ENCODE measurements at regions of chr16 and their contacts with region 1.

Region 1: DNA sequence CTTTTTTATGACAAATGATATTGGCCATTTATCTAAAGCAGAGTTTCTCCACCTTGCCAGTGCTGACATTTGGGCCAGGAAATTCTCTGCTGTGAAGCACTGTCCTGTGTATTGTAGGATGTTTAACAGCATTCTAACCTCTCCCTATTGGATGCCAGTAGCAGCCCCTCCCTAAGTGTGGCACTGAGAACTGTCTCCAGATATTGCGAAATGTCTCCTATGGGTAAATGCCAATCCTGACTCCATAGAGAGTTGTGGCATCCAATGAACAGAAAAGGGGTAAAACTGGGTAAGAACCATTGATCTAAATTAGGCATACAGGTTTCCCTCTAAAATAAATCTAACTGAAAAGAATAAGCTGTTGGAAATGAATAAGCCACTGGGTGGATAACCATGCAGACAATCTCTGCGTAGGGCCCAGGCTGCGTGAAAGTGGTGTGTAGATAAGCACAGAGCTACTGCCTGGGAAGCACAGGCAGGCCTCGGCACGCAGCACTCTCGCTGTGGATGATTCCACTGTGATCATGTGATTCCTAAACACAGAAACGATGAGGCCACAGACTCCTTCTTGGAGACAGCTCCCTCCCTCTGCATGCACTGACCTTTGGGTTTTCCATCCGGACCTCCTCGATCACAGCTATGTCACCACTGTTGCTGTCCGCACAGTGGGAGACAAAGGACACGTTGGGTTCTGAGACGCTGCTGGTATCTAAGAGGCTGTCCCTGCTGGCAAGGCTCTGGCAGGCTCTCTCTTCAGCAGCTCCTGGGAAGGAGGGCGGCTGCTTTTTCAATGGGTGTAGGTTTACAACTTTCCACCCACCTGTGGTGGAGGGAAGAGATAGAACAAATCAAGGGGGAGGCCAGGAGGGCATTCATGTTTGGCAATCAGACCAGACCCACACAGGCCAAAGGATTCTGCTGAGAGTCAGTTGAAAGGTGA is 44.1 kb downstream of the GTF3C1 start:
- DNase-seq: peak in 3 of 5 donors; percentile 33 to 67 (median 66)
- ATAC-seq: peak; percentile 84 to 86 (median 85)
- H3K4me3 ChIP-seq: no peak overlapping the region
- H3K27ac ChIP-seq: peak overlapping the region in 11 of 12 donors; percentile 9 to 86 (median 72)
- H3K4me1 ChIP-seq: peaks cover 0 to 22% (median 5%) of the 10 kb centered on the region in 12 donors
- H3K27me3 ChIP-seq: no peaks in the 10 kb centered on the region
- CTCF ChIP-seq: no peak
- POLR2A ChIP-seq: no peak

Region 2: DNA sequence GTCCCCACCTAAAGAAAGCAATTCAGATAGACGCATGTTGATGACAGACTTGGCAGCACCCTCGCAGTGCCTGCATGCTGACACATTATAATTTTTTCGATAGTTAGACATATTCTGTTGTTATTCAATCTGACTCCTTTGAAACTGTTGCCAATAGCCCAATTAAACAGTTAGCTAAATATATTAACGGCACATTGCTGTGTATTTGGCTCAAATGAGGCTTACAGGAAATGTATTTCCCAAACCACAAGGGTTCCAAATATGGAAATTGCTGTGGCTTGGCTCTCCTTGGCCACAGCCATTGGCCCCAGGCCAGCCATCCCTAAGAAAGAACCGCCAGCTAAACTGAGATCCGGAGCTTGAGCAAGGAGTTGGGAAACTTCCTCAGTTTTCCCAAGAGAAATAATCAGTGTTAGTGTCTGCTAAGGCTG is 407.8 kb before region 1 on chr16:
- intact Hi-C with region 1: no loop called
- DNase-seq: peak; percentile 60 to 86 (median 77)
- ATAC-seq: peak; percentile 82 to 88 (median 86)
- H3K4me3 ChIP-seq: no peak overlapping the region
- H3K27ac ChIP-seq: peak overlapping the region in 6 of 12 donors; percentile 3 to 61 (median 42)
- H3K4me1 ChIP-seq: peaks cover 0 to 19% (median 5%) of the 10 kb centered on the region in 12 donors
- H3K27me3 ChIP-seq: peaks cover 0 to 4% (median 0%) of the 10 kb centered on the region in 9 donors
- CTCF ChIP-seq: no peak
- POLR2A ChIP-seq: no peak

Region 3: GRCh38 chr16:27495191-27495590 is 10.4 kb before region 1 on chr16:
- intact Hi-C with region 1: loop called in 1 of 10 experiments (anchors 1 kb)
- DNase-seq: peak in 1 of 5 donors; percentile 45
- ATAC-seq: no peak
- H3K4me3 ChIP-seq: no peak overlapping the region
- H3K27ac ChIP-seq: no peak overlapping the region
- H3K4me1 ChIP-seq: peaks cover 0 to 21% (median 4%) of the 10 kb centered on the region in 12 donors
- H3K27me3 ChIP-seq: no peaks in the 10 kb centered on the region
- CTCF ChIP-seq: no peak
- POLR2A ChIP-seq: no peak

Region 4: GRCh38 chr16:27566417-27566816 is 60.9 kb after region 1 on chr16:
- intact Hi-C with region 1: loop called in 2 of 10 experiments (anchors 5 to 10 kb)
- DNase-seq: no peak
- ATAC-seq: no peak
- H3K4me3 ChIP-seq: no peak overlapping the region
- H3K27ac ChIP-seq: no peak overlapping the region
- H3K4me1 ChIP-seq: peaks cover 0 to 21% (median 0%) of the 10 kb centered on the region in 12 donors
- H3K27me3 ChIP-seq: no peaks in the 10 kb centered on the region
- CTCF ChIP-seq: no peak
- POLR2A ChIP-seq: no peak

Region 5: DNA sequence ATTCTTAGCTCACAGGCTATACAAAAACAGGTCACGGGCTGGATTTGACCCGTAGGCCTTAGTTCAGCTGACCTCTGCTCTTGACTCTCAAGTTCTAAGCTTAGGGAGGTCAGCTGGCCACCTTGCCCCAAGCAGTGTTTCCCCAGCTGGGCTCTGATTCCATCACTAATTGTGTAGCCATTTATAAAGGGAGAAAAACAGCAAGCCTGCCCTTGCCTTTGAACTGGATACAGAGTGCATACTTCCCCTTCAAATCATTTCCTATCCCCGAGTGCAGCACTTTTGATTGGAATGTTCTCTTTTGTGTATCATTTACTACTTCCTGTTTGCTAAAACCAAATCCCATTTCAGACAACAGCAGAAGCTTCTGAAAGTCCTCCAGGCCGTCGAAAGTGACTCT is 198.0 kb after region 1 on chr16:
- intact Hi-C with region 1: no loop called
- DNase-seq: no peak
- ATAC-seq: no peak
- H3K4me3 ChIP-seq: no peak overlapping the region
- H3K27ac ChIP-seq: no peak overlapping the region
- H3K4me1 ChIP-seq: peaks cover 0 to 11% (median 0%) of the 10 kb centered on the region in 12 donors
- H3K27me3 ChIP-seq: no peaks in the 10 kb centered on the region
- CTCF ChIP-seq: no peak
- POLR2A ChIP-seq: no peak

Region 6: GRCh38 chr16:27853101-27853500 is 347.5 kb after region 1 on chr16:
- intact Hi-C with region 1: loop called in 1 of 10 experiments (anchors 5 kb)
- DNase-seq: no peak
- ATAC-seq: peak in 1 of 4 donors; percentile 52
- H3K4me3 ChIP-seq: no peak overlapping the region
- H3K27ac ChIP-seq: no peak overlapping the region
- H3K4me1 ChIP-seq: peaks cover 0 to 12% (median 2%) of the 10 kb centered on the region in 12 donors
- H3K27me3 ChIP-seq: peaks cover 0 to 29% (median 0%) of the 10 kb centered on the region in 9 donors
- CTCF ChIP-seq: no peak
- POLR2A ChIP-seq: no peak